PC-3 (cell line): ENCODE measurements at regions of chrX and their contacts with region 1.

Region 1: GRCh38 chrX:150517303-150517910 is 51.0 kb upstream of the MTM1 start:
- DNase-seq: no peak
- ATAC-seq: no peak
- H3K4me3 ChIP-seq: no peak overlapping the region
- H3K27ac ChIP-seq: no peak overlapping the region
- H3K4me1 ChIP-seq: no peaks in the 10 kb centered on the region
- H3K27me3 ChIP-seq: no peaks in the 10 kb centered on the region
- CTCF ChIP-seq: no peak

Region 2: DNA sequence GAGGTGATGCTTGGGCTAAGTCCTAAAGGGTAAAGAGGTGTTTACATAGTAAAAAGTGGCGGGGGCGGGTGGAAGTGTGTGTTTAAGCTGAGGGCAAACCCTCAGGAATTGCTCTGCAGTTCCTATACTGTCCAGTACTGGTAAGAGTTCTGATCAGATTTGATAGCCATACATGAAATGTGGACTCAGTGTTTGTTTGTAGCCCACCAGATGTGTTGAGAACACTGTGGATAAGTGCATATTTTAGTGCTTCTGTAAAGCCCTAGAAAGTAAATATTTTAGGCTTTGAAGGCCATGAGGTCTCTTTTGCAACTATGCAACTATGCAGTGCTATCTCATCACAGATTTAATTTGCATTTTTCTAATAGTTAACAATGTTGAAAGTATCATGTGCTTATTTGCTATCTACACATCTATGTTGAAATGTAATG is 498.5 kb before region 1 on chrX:
- CTCF ChIA-PET with region 1: no interaction called
- POLR2A ChIA-PET with region 1: no interaction called
- intact Hi-C with region 1: no loop called
- DNase-seq: no peak
- ATAC-seq: no peak
- H3K4me3 ChIP-seq: no peak overlapping the region
- H3K27ac ChIP-seq: no peak overlapping the region
- H3K4me1 ChIP-seq: no peaks in the 10 kb centered on the region
- H3K27me3 ChIP-seq: no peaks in the 10 kb centered on the region
- CTCF ChIP-seq: no peak

Region 3: GRCh38 chrX:150558424-150558823 is 41.0 kb after region 1 on chrX:
- CTCF ChIA-PET with region 1: no interaction called
- POLR2A ChIA-PET with region 1: interaction called, 30 read pairs
- intact Hi-C with region 1: no loop called
- DNase-seq: no peak
- ATAC-seq: no peak
- H3K4me3 ChIP-seq: no peak overlapping the region
- H3K27ac ChIP-seq: no peak overlapping the region
- H3K4me1 ChIP-seq: no peaks in the 10 kb centered on the region
- H3K27me3 ChIP-seq: no peaks in the 10 kb centered on the region
- CTCF ChIP-seq: no peak

Region 4: GRCh38 chrX:150664290-150664689 is 146.9 kb after region 1 on chrX:
- CTCF ChIA-PET with region 1: no interaction called
- POLR2A ChIA-PET with region 1: no interaction called
- intact Hi-C with region 1: no loop called
- DNase-seq: no peak
- ATAC-seq: no peak
- H3K4me3 ChIP-seq: no peak overlapping the region
- H3K27ac ChIP-seq: no peak overlapping the region
- H3K4me1 ChIP-seq: no peaks in the 10 kb centered on the region
- H3K27me3 ChIP-seq: no peaks in the 10 kb centered on the region
- CTCF ChIP-seq: no peak